ENCODE measurements at regions of chr15 and their contacts with region 1.

Region 1: GRCh38 chr15:58749532-58750337 is at the start of gene ADAM10:
- DNase-seq: peak; percentile 96 to 99 (median 98)
- ATAC-seq: peak; percentile 89
- H3K4me3 ChIP-seq: peak within 1 kb of the TSS; percentile 98 to 100
- H3K4me3 Mint-ChIP-seq: peak within 1 kb of the TSS; percentile 98
- H3K27ac ChIP-seq: peak within 1 kb of the TSS; percentile 78 to 94
- H3K27ac Mint-ChIP-seq: peak within 1 kb of the TSS; percentile 96
- H3K4me1 ChIP-seq: peaks cover 27% of the 10 kb centered on the region
- H3K4me1 Mint-ChIP-seq: peaks cover 39% of the 10 kb centered on the region
- H3K27me3 ChIP-seq: no peaks in the 10 kb centered on the region
- H3K27me3 Mint-ChIP-seq: no peaks in the 10 kb centered on the region
- CTCF ChIP-seq: no peak
- total RNA-seq, gene ADAM10: 64.2 to 67.8 TPM

Region 2: GRCh38 chr15:58632789-58633188 is 116.9 kb before region 1 on chr15:
- CTCF ChIA-PET with region 1: no interaction called
- POLR2A ChIA-PET with region 1: no interaction called
- intact Hi-C with region 1: loop called in 1 of 2 experiments (anchors 5 kb)
- DNase-seq: no peak
- ATAC-seq: no peak
- H3K4me3 ChIP-seq: no peak overlapping the region
- H3K4me3 Mint-ChIP-seq: no peak overlapping the region
- H3K27ac ChIP-seq: no peak overlapping the region
- H3K27ac Mint-ChIP-seq: no peak overlapping the region
- H3K4me1 ChIP-seq: peaks cover 9% of the 10 kb centered on the region
- H3K4me1 Mint-ChIP-seq: peaks cover 28% of the 10 kb centered on the region
- H3K27me3 ChIP-seq: no peaks in the 10 kb centered on the region
- H3K27me3 Mint-ChIP-seq: no peaks in the 10 kb centered on the region
- CTCF ChIP-seq: no peak

Region 3: GRCh38 chr15:58690703-58691102 is 59.0 kb before region 1 on chr15:
- CTCF ChIA-PET with region 1: no interaction called
- POLR2A ChIA-PET with region 1: no interaction called
- intact Hi-C with region 1: loop called in 1 of 2 experiments (anchors 10 kb)
- DNase-seq: peak in 1 of 9 experiments; percentile 14
- ATAC-seq: peak; percentile 31
- H3K4me3 ChIP-seq: no peak overlapping the region
- H3K4me3 Mint-ChIP-seq: no peak overlapping the region
- H3K27ac ChIP-seq: no peak overlapping the region
- H3K27ac Mint-ChIP-seq: peak overlapping the region; percentile 2
- H3K4me1 ChIP-seq: peaks cover 19% of the 10 kb centered on the region
- H3K4me1 Mint-ChIP-seq: peaks cover 66% of the 10 kb centered on the region
- H3K27me3 ChIP-seq: no peaks in the 10 kb centered on the region
- H3K27me3 Mint-ChIP-seq: no peaks in the 10 kb centered on the region
- CTCF ChIP-seq: no peak

Region 4: DNA sequence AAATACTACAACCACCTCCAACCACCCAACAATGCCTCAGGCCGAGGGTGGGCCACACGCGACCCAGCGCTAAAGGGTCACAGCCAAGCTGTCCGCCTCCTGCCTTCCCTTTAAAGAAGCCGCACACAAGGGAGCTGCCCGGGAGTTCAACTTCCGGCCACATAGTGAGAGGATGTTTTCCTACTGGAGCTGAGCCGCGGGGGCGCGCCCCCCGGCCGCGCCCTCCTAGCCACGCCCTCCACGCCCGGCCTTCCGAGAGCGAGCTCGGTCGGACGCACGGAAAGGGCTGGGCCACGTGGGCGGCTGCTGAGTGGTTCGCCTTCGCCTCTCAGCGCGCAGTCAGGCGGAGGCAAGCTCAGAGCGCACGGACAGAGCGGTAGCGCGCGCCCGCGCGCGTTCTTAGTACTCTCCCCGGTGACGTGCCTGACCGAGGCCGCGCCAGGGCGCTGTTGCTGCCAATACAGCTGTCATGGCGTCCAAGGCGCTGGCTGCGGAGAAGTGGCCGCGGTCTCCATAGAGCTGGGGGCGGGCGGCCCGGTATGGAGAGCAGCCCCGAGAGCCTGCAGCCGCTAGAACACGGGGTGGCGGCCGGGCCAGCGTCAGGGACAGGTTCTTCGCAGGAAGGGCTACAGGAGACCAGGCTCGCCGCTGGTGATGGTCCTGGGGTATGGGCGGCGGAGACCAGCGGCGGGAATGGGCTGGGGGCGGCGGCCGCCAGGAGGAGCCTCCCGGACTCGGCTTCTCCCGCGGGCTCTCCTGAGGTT is 21.3 kb after region 1 on chr15 and contains the start of gene MINDY2:
- CTCF ChIA-PET with region 1: interaction called, 8 read pairs
- POLR2A ChIA-PET with region 1: interaction called, 62 read pairs
- intact Hi-C with region 1: loop called (anchors 1 kb)
- DNase-seq: peak; percentile 83 to 97 (median 94)
- ATAC-seq: peak; percentile 94
- H3K4me3 ChIP-seq: peak within 1 kb of the TSS; percentile 98
- H3K4me3 Mint-ChIP-seq: peak within 1 kb of the TSS; percentile 92
- H3K27ac ChIP-seq: peak within 1 kb of the TSS; percentile 86 to 89
- H3K27ac Mint-ChIP-seq: peak within 1 kb of the TSS; percentile 94
- H3K4me1 ChIP-seq: peaks cover 34% of the 10 kb centered on the region
- H3K4me1 Mint-ChIP-seq: peaks cover 22% of the 10 kb centered on the region
- H3K27me3 ChIP-seq: no peaks in the 10 kb centered on the region
- H3K27me3 Mint-ChIP-seq: no peaks in the 10 kb centered on the region
- CTCF ChIP-seq: no peak
- total RNA-seq, gene MINDY2: 4.7 to 4.9 TPM

Region 5: GRCh38 chr15:58987489-58988005 is 237.8 kb after region 1 on chr15 and contains the start of gene RNF111:
- CTCF ChIA-PET with region 1: no interaction called
- POLR2A ChIA-PET with region 1: interaction called, 3 read pairs
- intact Hi-C with region 1: loop called in 1 of 2 experiments (anchors 5 kb)
- DNase-seq: peak; percentile 77 to 97 (median 88)
- ATAC-seq: peak; percentile 95
- H3K4me3 ChIP-seq: peak within 1 kb of the TSS; percentile 87 to 100
- H3K4me3 Mint-ChIP-seq: peak within 1 kb of the TSS; percentile 95
- H3K27ac ChIP-seq: peak within 1 kb of the TSS; percentile 84
- H3K27ac Mint-ChIP-seq: peak within 1 kb of the TSS; percentile 94
- H3K4me1 ChIP-seq: peaks cover 23% of the 10 kb centered on the region
- H3K4me1 Mint-ChIP-seq: peaks cover 43% of the 10 kb centered on the region
- H3K27me3 ChIP-seq: no peaks in the 10 kb centered on the region
- H3K27me3 Mint-ChIP-seq: no peaks in the 10 kb centered on the region
- CTCF ChIP-seq: no peak
- total RNA-seq, gene RNF111: 25.2 to 28.4 TPM

Region 6: DNA sequence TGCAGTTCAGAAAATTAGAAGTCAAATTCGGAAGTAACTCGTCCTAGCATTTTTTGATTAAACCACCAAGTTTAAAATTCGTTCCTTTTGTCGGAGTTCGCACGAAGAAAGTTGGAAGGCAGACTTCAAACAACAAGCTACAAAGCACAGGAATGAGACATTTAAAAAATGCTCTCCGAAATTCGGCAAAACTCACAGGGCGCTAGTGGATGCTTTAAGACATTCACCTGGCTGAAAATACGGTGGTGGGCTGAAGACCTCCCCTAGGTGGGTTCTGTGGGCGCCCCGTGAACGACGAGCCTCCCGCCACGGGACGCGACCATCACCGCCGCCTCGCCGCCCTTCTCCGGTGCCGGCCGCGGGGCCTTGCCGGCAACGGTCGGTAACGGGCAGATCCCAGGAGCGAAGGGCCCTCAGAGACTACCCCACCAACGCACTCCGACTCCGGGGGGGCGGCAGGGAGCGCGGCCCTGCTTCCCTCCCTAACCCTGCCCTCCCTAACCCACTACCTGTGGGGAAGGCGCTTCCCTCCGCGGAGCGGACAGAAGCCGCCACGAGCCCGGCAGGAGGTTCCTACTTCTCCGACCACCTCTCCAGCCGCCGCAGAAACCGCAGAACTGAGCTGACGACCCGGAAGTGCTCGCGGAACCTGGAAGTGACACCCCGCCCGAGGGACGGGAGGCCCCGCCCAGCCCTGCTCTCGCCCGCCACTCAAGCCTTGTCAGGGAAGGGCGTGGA is 907.3 kb after region 1 on chr15 and contains the start of gene GTF2A2:
- CTCF ChIA-PET with region 1: no interaction called
- POLR2A ChIA-PET with region 1: no interaction called
- intact Hi-C with region 1: loop called in 1 of 2 experiments (anchors 5 kb)
- DNase-seq: peak; percentile 82 to 96 (median 93)
- ATAC-seq: peak; percentile 99
- H3K4me3 ChIP-seq: peak within 1 kb of the TSS; percentile 82 to 85
- H3K4me3 Mint-ChIP-seq: peak within 1 kb of the TSS; percentile 51
- H3K27ac ChIP-seq: peak within 1 kb of the TSS; percentile 72 to 87
- H3K27ac Mint-ChIP-seq: peak within 1 kb of the TSS; percentile 83
- H3K4me1 ChIP-seq: peaks cover 24% of the 10 kb centered on the region
- H3K4me1 Mint-ChIP-seq: peaks cover 13% of the 10 kb centered on the region
- H3K27me3 ChIP-seq: no peaks in the 10 kb centered on the region
- H3K27me3 Mint-ChIP-seq: no peaks in the 10 kb centered on the region
- CTCF ChIP-seq: no peak
- total RNA-seq, gene GTF2A2: 62.7 to 63.6 TPM

Measured in CD8-positive, alpha-beta T cell (primary cell).